ENCODE measurements at regions of chr11 and their contacts with region 1.

Region 1: DNA sequence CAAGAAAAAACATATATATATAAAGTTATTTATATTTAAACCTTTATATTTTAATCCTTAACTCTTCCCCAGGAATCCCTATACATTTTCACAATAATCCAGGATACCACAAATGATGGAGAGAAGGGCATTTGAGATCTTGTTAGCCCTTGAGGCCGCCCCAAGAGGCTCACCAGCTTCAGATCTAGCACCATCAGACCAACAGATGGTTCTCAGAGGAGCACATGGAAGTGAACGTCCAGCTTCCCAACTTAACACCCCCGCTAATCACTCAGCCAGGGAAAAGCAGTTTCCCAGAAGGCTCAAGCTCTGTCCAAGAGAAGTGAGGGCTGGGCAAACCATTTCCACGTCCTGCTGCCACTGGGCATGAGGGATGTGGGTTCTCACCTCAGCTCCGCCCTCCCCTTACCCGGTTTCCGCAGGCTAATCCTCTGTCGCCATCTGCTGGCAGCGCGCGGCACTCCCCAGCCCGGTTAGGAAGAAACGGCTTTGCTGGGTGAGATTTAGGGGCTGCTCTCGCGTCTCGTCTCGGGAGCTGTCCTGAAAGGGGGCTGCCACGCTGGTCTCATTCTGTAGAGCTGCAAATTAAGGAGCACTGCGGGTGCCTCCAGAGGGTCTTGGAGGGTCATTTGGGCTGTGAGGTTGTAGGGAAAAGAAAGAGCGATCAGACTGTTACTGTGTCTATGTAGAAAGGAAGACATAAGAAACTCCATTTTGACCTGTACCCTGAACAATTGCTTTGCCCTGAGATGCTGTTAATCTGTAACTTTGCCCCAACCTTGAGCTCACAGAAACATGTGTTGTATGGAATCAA is 6.8 kb upstream of the FAM111A start:
- DNase-seq: peak; percentile 82
- H3K4me3 ChIP-seq: no peak overlapping the region
- H3K27ac ChIP-seq: no peak overlapping the region
- H3K4me1 ChIP-seq: no peaks in the 10 kb centered on the region
- H3K27me3 ChIP-seq: no peaks in the 10 kb centered on the region
- CTCF ChIP-seq: peak; percentile 98 to 99
- POLR2A ChIP-seq: no peak

Region 2: GRCh38 chr11:58958500-58958899 is 177.4 kb before region 1 on chr11:
- CTCF ChIA-PET with region 1: interaction called, 4 read pairs
- POLR2A ChIA-PET with region 1: no interaction called
- dilution Hi-C with region 1: no loop called
- intact Hi-C with region 1: loop called (anchors 1 kb)
- DNase-seq: peak; percentile 9
- H3K4me3 ChIP-seq: no peak overlapping the region
- H3K27ac ChIP-seq: no peak overlapping the region
- H3K4me1 ChIP-seq: no peaks in the 10 kb centered on the region
- H3K27me3 ChIP-seq: peaks cover 0 to 4% of the 10 kb centered on the region in 2 experiments
- CTCF ChIP-seq: peak in 1 of 2 donors; percentile 31
- POLR2A ChIP-seq: no peak

Region 3: DNA sequence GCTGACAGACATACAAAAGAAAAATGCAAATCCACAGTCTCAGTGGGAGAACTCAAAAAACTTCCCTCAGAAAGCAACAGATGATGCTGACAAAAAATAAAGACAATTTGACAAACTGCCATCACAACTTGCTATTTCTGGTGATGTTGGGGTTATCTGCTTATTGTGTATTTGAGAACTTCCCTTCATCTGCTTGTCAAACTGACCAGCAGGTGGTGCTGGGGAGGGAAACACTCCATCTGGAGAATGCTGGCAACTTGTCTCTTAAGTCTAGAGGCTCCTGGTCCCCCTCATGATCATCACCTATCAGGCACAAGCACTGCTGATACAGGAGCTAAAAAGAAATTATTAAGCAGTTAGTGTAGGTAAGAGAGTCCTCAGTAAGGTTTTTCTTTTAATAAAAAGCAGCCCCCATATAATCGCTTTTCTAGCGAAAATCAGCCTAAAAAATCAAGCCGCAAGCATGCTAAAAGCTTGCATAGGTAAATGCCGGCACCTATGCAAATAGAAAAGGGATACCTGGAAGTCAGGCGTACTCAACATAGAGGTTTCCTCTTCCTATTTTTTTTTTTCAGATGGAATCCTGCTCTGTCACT is 38.6 kb before region 1 on chr11:
- CTCF ChIA-PET with region 1: interaction called, 59 read pairs
- POLR2A ChIA-PET with region 1: no interaction called
- dilution Hi-C with region 1: no loop called
- intact Hi-C with region 1: loop called (anchors 1 kb)
- DNase-seq: peak; percentile 64
- H3K4me3 ChIP-seq: no peak overlapping the region
- H3K27ac ChIP-seq: no peak overlapping the region
- H3K4me1 ChIP-seq: peaks cover 2% of the 10 kb centered on the region
- H3K27me3 ChIP-seq: peaks cover 4% of the 10 kb centered on the region in 2 experiments
- CTCF ChIP-seq: peak; percentile 41 to 65
- POLR2A ChIP-seq: no peak

Region 4: GRCh38 chr11:59117774-59118173 is 18.1 kb before region 1 on chr11:
- CTCF ChIA-PET with region 1: interaction called, 20 read pairs
- POLR2A ChIA-PET with region 1: no interaction called
- dilution Hi-C with region 1: no loop called
- intact Hi-C with region 1: no loop called
- DNase-seq: no peak
- H3K4me3 ChIP-seq: no peak overlapping the region
- H3K27ac ChIP-seq: no peak overlapping the region
- H3K4me1 ChIP-seq: no peaks in the 10 kb centered on the region
- H3K27me3 ChIP-seq: no peaks in the 10 kb centered on the region
- CTCF ChIP-seq: no peak
- POLR2A ChIP-seq: no peak

Region 5: GRCh38 chr11:59158206-59159068 is 22.6 kb after region 1 on chr11:
- CTCF ChIA-PET with region 1: interaction called, 44 read pairs
- POLR2A ChIA-PET with region 1: no interaction called
- dilution Hi-C with region 1: no loop called
- intact Hi-C with region 1: no loop called
- DNase-seq: peak; percentile 76
- H3K4me3 ChIP-seq: no peak overlapping the region
- H3K27ac ChIP-seq: no peak overlapping the region
- H3K4me1 ChIP-seq: peaks cover 2% of the 10 kb centered on the region
- H3K27me3 ChIP-seq: peaks cover 6 to 7% of the 10 kb centered on the region in 2 experiments
- CTCF ChIP-seq: peak; percentile 72 to 82
- POLR2A ChIP-seq: no peak

Measured in endothelial cell of umbilical vein (primary cell).